ENCODE measurements at regions of chr6 and their contacts with region 1.

Region 1: DNA sequence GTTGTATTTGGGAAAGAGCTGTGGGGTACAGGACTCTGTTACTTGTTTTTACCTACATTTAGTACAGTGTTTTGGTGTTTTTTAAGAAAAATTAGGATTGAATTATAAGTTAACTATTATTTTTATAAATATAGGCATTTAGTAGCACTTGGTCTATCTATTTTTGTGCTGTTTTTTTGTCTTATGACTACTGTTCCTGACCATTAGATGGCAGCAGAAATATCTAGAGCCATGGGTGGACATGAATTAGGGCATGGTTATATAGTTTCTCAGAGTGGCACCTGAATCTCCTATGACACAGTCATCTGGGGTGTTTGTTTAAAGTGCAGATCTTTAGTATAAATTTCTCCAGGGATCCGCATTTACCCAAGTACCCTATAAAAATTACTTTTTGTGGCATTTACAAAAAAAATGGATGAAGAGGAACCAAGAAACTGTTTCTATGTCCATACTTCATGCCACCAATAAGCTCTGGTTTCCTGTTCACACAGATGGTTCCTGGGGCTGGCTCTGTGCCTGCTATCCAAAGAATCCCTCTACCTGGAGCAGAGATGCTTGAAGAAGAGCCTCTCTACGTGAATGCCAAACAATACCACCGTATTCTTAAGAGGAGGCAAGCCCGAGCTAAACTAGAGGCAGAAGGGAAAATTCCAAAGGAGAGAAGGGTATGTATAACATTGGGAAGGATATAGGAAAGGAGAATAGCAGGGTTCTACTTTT is 19.8 kb downstream of the NFYA start:
- DNase-seq: peak; percentile 35
- CTCF ChIP-seq: peak; percentile 47

Region 2: GRCh38 chr6:40852779-40853373 is 239.7 kb before region 1 on chr6:
- in situ Hi-C with region 1: no loop called
- DNase-seq: no peak
- CTCF ChIP-seq: no peak

Region 3: DNA sequence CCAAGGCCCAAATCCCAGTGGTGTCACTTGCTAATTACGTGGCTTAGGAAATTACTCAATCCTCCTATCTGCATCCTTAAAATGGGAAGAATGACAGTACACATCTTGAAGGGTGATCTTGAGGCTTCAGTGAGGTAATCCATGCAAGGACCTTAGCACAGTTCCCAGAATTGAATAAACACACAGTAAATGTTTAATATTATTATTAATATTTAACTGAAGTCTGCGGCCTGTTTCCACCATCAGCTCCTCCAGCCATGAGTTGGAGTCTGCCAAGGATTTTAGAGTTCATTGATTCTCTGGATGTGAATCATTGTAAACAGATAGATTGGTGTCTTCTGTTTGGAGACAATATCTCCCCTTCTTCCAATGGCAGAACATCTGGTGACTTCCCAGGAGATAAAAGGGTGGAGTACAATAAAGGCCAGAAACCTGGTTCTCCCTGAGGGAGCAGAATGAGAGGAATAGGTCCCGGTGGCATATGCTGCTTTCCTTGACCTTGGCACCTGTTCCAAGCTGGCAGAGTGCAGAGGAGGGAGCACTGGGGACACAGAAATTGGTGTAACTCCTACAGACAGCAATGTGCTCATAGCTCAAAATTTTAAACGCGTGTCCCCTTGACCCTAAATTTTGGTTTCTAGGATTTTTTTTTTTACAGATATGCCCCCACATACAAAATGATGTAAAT is 79.0 kb before region 1 on chr6:
- in situ Hi-C with region 1: no loop called
- DNase-seq: no peak
- CTCF ChIP-seq: no peak

Region 4: DNA sequence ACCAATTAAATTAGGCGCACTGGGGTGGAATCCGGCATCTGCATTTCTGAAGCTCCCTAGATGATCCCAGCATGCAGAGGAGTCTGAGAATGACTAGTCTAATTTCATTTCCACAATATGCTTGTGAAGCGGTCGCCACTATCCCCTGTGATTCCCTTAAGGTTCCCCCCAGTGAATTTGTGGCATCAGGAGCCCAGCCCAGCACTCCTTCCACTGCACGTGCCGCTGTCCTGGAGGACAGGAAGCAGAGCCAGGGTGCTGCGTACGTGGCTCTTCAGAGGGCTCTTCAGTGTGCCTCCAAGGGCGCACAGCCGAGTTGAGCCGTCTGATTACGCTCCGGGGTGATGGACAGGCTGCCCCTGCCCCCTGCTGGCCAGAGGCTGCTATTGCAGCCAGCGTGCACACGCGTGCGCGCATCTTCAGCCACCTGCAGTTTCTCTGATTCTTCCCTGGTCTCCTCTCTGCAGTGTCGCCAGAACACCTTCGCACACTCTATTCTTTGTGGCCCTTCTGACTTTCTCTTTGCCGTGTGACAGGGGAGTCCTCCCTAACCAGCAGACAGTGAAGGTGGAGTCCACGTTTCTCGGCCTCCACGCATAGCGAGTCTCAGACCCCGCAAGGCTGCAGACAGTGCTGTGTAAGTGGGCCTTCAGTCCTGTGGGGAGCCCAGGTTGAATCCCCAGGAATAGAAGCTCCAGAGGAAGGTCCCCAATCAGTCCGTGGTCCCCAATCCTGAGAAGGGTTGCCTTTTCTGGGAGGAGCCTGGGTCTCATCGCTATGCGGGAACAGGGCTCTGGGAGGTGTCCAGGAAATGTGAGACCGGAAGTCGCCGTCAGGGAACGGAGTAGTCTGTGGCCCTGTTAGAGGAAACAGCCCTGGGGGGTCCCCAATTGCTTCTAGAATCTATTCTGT is 226.3 kb after region 1 on chr6:
- in situ Hi-C with region 1: loop called (anchors 25 kb)
- DNase-seq: peak; percentile 79
- CTCF ChIP-seq: peak; percentile 99

Measured in GM13977 (cell line).